Right ventricle myocardium inferior (tissue), 1 donor: ENCODE measurements at regions of chr16 and their contacts with region 1.

Region 1: DNA sequence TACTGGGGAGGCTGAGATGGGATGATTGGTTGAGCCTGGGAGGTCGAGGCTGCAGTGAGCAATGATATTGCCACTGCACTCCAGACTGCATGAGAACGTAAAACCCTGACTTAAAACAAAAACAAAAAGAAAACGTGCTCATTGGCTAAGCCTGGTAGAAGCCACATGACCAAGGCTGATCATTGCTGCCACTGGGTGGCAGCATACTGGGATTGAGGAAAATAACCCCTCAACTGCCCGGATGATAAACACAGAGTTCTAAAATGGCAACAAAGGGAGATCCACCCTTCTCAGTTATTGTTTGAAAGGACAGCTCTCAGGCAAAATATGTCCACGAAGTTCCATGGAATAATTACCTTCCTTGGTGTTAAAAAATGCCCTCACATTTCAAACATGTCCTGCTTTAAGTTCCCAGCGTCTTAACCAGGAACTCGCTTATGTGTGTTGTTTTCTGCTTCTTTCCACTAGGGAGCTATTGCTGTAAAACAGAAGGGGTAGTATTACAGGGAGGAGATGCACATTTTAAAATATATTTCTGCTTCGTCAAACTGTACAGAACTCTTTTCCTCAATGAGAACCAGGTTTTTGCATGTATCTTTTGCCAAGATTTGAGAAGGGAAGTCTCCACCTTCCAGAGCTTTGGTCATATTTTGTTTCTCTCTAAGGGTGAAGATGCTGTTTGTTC is 675.3 kb downstream of the MAF start:
- DNase-seq: no peak
- ATAC-seq: peak; percentile 54

Region 2: GRCh38 chr16:78705694-78706093 is 219.5 kb before region 1 on chr16:
- intact Hi-C with region 1: no loop called
- DNase-seq: no peak
- ATAC-seq: no peak

Region 3: GRCh38 chr16:79047229-79047983 is 122.2 kb after region 1 on chr16:
- intact Hi-C with region 1: loop called (anchors 10 kb)
- DNase-seq: no peak
- ATAC-seq: no peak